ENCODE measurements at regions of chr10 and their contacts with region 1.

Region 1: GRCh38 chr10:86899670-86900276 is 57.6 kb downstream of the MMRN2 start:
- DNase-seq: peak; percentile 63 to 89
- H3K4me3 ChIP-seq: no peak overlapping the region
- H3K27ac ChIP-seq: peak overlapping the region in 1 of 5 donors; percentile 42
- H3K4me1 ChIP-seq: peaks cover 0 to 34% (median 18%) of the 10 kb centered on the region in 4 donors
- H3K27me3 ChIP-seq: no peaks in the 10 kb centered on the region
- CTCF ChIP-seq: peak in 5 of 7 experiments; percentile 49 to 82 (median 65)
- EP300 ChIP-seq: no peak
- POLR2A ChIP-seq: no peak

Region 2: DNA sequence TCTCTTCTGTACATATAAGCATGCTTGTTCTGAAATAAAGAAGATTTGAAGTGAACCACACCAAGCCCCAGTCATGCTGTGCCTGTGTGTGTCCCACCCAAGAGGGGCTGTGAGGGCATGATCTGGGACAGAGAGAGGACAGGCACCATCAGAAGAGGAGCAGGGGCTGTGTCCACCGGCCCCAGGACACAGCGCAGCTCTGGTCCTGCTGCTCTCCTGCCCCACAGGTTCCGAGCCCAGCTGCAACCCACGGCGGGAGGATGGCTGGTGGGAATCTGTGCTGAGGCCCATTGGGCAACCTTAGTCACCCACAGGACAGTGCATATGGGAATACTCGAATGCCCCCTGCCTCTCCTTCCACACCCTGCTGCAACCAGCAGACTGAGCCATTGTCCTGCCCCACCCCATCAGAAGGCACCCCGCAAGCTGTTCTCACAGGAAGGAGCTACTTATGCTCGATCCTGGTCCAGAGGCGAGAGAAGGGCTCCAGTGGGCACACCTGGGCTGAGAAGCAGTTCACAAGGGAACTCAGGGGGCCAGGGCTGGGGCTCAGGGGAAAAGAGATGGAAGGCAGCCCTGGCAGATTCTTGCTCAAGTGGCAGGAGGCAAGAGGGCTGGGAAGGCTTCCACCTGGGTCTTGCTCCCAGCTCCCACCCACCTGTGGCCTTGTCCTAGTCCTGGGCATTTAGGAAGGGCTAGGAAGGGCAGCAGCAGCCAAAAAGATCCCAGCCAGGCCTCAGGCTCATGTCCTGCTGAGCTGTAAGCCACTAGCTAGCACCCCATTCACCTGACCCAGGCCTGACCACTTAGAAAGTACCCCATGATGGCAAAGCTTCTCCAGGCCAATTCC is 199.6 kb before region 1 on chr10:
- intact Hi-C with region 1: loop called (anchors 5 kb)
- DNase-seq: no peak
- H3K4me3 ChIP-seq: no peak overlapping the region
- H3K27ac ChIP-seq: no peak overlapping the region
- H3K4me1 ChIP-seq: no peaks in the 10 kb centered on the region
- H3K27me3 ChIP-seq: no peaks in the 10 kb centered on the region
- CTCF ChIP-seq: no peak
- EP300 ChIP-seq: no peak
- POLR2A ChIP-seq: no peak